Colonic mucosa (tissue), 4 donors: ENCODE measurements at regions of chr11 and their contacts with region 1.

Region 1: DNA sequence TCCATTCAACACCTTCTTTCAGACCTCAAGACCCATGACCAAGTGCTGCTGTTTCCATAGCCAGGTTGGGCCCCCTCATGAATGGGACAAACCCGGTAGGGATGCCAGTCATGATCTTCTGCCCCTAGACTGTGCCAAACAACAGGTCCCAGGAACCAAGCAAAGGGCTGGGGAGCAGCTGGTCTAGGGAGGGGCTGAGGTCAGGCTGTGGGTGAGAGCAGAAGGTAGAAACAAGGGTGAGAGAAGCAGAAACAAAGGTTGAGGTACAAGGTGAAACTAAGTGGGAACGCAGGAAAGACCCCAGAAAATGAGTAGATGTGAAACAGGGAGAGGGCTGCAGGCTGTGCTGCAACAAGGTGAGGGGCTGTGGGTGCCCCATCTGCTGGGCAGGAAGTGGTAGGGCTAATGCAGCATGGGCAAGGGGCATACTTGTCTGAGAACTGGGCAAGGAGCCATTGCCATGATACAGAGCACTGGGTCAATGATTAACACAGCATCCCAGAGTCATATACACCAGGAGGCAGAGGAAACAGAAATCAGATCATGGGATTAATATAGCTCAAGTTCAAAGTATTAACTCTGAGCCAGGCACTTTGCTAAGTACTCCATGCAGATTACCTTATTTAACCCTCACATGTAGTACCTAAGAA is 45.9 kb downstream of the SLC1A2 start:
- DNase-seq: peak; percentile 37
- H3K4me3 ChIP-seq: no peak overlapping the region
- H3K27ac ChIP-seq: no peak overlapping the region
- H3K4me1 ChIP-seq: no peaks in the 10 kb centered on the region
- H3K27me3 ChIP-seq: no peaks in the 10 kb centered on the region
- CTCF ChIP-seq: no peak

Region 2: DNA sequence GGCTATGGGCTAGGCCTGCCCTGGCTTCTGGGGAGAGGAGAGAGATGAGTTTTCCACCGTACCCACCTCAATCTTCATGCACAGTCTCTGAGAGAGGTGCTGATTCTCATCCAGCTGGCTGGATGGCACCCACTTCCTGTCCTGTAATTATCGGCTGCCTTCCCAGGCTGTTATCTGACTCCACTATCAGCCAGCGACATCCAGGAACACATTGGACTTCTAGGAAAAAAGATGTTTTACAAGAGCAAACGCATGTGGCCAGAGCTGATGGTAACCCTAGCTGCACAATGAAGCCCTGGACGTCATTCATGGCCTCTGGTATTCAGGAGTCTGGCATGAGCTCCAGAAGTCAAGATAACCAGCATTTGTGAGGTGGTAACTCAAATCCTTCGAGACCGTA is 615.1 kb before region 1 on chr11:
- intact Hi-C with region 1: no loop called
- DNase-seq: no peak
- H3K4me3 ChIP-seq: no peak overlapping the region
- H3K27ac ChIP-seq: no peak overlapping the region
- H3K4me1 ChIP-seq: no peaks in the 10 kb centered on the region
- H3K27me3 ChIP-seq: no peaks in the 10 kb centered on the region
- CTCF ChIP-seq: no peak

Region 3: DNA sequence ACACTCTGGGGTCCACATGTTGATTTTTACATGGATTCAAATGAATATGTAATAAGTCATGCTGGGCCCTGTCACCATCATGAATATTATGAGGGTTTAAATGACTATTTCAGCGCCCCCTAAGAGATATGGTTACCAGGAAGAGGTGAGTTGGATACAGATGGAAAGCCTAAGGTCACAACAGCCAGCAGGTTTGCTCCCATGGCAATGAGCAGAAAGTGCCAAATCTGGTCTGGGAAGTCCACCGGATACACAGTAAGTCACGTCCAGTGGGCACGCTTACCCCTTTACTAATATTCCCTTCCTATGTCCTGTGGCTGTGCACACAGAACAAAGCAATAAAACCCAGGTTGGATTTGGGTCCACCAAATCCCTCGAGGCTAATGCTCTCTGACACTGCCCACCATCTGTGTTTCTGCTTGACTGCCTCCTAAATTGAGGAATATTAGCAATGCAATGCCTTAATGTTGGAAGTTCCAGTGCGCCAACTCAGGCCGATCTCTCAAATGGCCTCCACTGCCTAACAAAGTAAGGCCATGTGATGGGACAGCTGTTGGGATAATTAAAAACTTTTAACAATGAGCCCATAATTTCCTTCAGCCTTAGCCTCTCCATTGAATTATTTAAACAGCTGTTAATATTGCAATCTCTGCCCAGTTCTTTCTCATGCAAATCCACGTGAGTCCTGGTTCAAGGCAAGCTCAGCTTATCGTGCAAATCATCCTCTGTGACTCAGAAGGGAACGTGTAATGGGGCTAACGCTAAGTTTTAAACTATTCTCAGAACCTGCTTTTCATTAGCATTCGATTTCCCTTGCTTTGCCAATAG is 51.7 kb before region 1 on chr11:
- intact Hi-C with region 1: loop called (anchors 5 kb)
- DNase-seq: no peak
- H3K4me3 ChIP-seq: no peak overlapping the region
- H3K27ac ChIP-seq: no peak overlapping the region
- H3K4me1 ChIP-seq: no peaks in the 10 kb centered on the region
- H3K27me3 ChIP-seq: no peaks in the 10 kb centered on the region
- CTCF ChIP-seq: no peak